H1 (cell line): ENCODE measurements at regions of chr5 and their contacts with region 1.

Region 1: GRCh38 chr5:59810041-59810440 is 83.5 kb downstream of the PDE4D start:
- DNase-seq: peak in 1 of 2 experiments; percentile 78
- H3K4me3 ChIP-seq: peak overlapping the region in 1 of 4 experiments; percentile 43; a peak in 3 of 8 replicates
- H3K27ac ChIP-seq: no peak overlapping the region
- H3K4me1 ChIP-seq: no peaks in the 10 kb centered on the region
- H3K27me3 ChIP-seq: no peaks in the 10 kb centered on the region
- CTCF ChIP-seq: peak; percentile 73 to 87 (median 79)
- EP300 ChIP-seq: no peak
- POLR2A ChIP-seq: no peak
- RAD21 ChIP-seq: peak; percentile 80 to 82

Region 2: GRCh38 chr5:59799668-59800346 is 10.2 kb before region 1 on chr5:
- CTCF ChIA-PET with region 1: interaction called, 19 read pairs
- POLR2A ChIA-PET with region 1: no interaction called
- DNase-seq: no peak
- H3K4me3 ChIP-seq: peak overlapping the region in 2 of 4 experiments; percentile 9 to 38; a peak in 1 of 8 replicates
- H3K27ac ChIP-seq: no peak overlapping the region
- H3K4me1 ChIP-seq: peaks cover 0 to 8% (median 0%) of the 10 kb centered on the region in 4 experiments; a peak in 2 of 7 replicates
- H3K27me3 ChIP-seq: no peaks in the 10 kb centered on the region
- CTCF ChIP-seq: peak in 2 of 3 experiments; percentile 52 to 59; a peak in 2 of 4 replicates
- EP300 ChIP-seq: no peak
- POLR2A ChIP-seq: no peak
- RAD21 ChIP-seq: peak; percentile 86 to 90

Region 3: DNA sequence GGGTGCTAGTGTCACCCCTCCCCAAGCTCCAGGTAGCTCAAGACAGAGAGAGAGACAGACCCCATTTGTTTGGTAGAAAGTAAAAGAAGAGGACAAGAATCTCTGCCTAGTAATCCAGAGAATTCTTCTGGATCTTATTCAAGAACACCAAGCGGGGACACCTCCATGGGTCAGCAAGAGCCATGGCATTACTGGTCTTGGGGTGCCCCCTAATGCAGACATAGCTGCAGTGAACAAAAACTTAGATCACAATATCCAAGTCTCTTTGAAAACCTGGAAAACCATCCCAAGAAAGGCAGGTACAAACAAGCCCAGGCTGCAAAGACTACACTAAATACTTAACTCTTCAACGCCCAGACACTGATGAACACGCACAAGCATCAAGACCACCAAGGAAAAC is 113.4 kb after region 1 on chr5:
- CTCF ChIA-PET with region 1: interaction called, 59 read pairs
- POLR2A ChIA-PET with region 1: no interaction called
- DNase-seq: no peak
- H3K4me3 ChIP-seq: no peak overlapping the region
- H3K27ac ChIP-seq: no peak overlapping the region
- H3K4me1 ChIP-seq: peaks cover 0 to 5% (median 4%) of the 10 kb centered on the region in 4 experiments; a peak in 4 of 7 replicates
- H3K27me3 ChIP-seq: no peaks in the 10 kb centered on the region; a peak in 3 of 7 replicates
- CTCF ChIP-seq: peak; percentile 20 to 65 (median 44)
- EP300 ChIP-seq: no peak
- POLR2A ChIP-seq: no peak
- RAD21 ChIP-seq: peak; percentile 83 to 85

Region 4: GRCh38 chr5:60161340-60161934 is 351.4 kb after region 1 on chr5:
- CTCF ChIA-PET with region 1: interaction called, 18 read pairs
- POLR2A ChIA-PET with region 1: no interaction called
- DNase-seq: no peak
- H3K4me3 ChIP-seq: no peak overlapping the region
- H3K27ac ChIP-seq: no peak overlapping the region
- H3K4me1 ChIP-seq: no peaks in the 10 kb centered on the region
- H3K27me3 ChIP-seq: no peaks in the 10 kb centered on the region
- CTCF ChIP-seq: peak in 2 of 3 experiments; percentile 45 to 60; a peak in 2 of 4 replicates
- EP300 ChIP-seq: no peak
- POLR2A ChIP-seq: no peak
- RAD21 ChIP-seq: peak; percentile 69

Region 5: DNA sequence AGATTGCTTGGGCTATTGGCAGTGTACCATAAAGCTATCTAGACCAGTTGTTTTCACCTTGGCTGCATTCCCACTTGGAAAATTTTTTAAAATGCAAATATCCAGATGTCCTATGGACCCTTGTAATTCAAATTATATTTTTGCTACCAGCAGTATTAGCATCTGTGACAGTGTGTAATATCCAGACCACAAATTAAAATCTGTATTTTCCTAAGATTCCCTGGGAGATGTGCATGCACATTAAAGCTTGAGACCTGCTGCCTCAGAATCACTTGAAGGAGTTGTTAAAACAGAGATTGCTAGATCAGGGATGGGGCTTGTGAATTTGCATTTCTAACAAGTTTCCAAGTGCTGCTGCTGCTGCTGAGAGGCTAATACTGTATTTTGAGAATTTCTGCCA is 464.7 kb after region 1 on chr5:
- CTCF ChIA-PET with region 1: interaction called, 13 read pairs
- POLR2A ChIA-PET with region 1: no interaction called
- DNase-seq: no peak
- H3K4me3 ChIP-seq: no peak overlapping the region
- H3K27ac ChIP-seq: no peak overlapping the region
- H3K4me1 ChIP-seq: no peaks in the 10 kb centered on the region
- H3K27me3 ChIP-seq: no peaks in the 10 kb centered on the region
- CTCF ChIP-seq: no peak
- EP300 ChIP-seq: no peak
- POLR2A ChIP-seq: no peak
- RAD21 ChIP-seq: no peak

Region 6: GRCh38 chr5:60287174-60287771 is 477.2 kb after region 1 on chr5:
- CTCF ChIA-PET with region 1: interaction called, 44 read pairs
- POLR2A ChIA-PET with region 1: no interaction called
- DNase-seq: peak; percentile 47 to 68
- H3K4me3 ChIP-seq: no peak overlapping the region
- H3K27ac ChIP-seq: no peak overlapping the region
- H3K4me1 ChIP-seq: no peaks in the 10 kb centered on the region
- H3K27me3 ChIP-seq: peaks cover 0 to 1% (median 0%) of the 10 kb centered on the region in 4 experiments; a peak in 1 of 7 replicates
- CTCF ChIP-seq: peak; percentile 85 to 99 (median 98)
- EP300 ChIP-seq: no peak
- POLR2A ChIP-seq: no peak
- RAD21 ChIP-seq: peak; percentile 89 to 91